Mammary epithelial cell (primary cell): ENCODE measurements at regions of chr1 and their contacts with region 1.

Region 1: DNA sequence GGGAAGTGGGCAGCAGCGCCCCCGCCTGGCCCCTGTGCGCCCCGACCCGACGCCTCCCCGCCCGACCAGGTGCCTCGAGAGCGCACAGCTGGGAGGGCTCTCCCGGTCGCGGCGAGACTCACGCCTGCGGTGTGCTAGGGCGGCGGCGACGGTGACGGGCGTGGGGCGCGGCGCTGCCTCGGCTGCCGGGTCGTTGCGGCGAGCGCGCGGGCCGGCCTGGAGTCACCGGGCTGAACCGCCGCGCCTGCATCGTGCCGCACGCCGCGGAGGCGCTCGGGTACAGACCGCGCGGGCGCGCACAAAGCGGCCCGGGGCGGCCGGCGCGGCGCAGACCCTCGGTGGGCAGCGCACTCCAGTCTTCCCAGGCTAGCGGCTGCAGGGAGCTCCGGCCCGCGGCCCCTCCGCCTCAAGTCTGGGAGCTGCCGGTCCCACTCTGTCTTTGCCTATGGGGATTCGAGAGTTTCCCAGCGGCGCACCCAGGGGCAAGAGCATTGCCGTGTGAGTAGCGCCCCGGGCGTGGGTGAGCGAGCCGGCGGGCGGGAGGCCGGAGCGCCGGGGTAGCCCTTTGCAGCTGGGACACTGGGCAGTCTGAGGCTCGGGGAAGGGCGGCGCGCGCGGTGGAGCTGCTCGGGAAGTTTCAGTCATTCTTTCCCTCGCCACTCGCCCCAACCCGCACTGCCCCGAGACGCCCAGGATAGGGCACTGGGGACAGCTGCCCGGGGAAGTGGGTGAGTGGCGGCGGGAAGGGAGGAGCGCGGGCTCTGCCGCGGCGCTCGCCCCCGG is at the start of gene SLC35F3:
- DNase-seq: peak; percentile 82
- H3K4me3 ChIP-seq: peak within 1 kb of the TSS; percentile 79 to 88 (median 85)
- H3K27ac ChIP-seq: peak within 1 kb of the TSS; percentile 70
- H3K4me1 ChIP-seq: peaks cover 26% of the 10 kb centered on the region
- H3K27me3 ChIP-seq: no peaks in the 10 kb centered on the region
- CTCF ChIP-seq: peak; percentile 43 to 54
- total RNA-seq, gene SLC35F3: 14.6 to 23.3 TPM

Region 2: DNA sequence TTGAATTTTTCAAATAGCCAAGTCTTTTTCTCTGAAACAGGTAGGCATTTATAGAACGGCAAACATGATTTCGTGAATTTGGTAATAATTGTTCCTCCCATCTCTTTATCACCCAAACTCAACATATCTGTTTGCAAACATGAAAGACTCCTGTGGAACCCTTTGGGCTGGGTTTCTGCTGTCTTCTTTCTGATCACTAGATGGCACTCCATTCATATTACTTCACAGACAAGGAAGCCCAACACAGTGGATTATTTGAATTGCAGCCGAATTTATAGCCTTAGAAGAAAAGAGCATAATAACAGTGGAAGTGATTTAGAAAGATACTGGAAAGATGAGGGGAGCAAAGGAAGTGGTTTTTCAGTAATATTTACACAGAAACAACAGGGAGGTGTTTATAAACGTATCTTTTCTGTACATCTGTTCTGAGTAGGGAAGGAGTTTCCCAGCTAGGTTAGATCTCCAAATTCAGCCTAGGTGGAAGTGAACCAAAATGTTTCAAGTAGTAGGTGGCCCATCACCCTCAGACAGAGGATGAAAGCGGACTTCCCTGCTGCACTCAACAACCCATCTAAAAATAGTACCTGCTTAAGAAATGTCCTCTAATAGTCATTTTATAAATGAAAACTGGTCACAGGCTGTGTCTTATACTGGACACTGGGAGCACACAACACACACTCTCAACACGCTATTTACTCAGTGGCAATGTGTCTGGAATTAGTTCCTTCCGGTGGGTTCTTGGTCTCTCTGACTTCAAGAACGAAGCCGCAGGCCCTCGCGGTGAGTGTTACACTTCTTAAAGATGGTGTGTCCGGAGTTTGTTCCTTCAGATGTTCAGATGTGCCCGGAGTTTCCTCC is 509.7 kb before region 1 on chr1:
- CTCF ChIA-PET with region 1: no interaction called
- dilution Hi-C with region 1: no loop called
- in situ Hi-C with region 1: no loop called
- intact Hi-C with region 1: loop called (anchors 10 kb)
- DNase-seq: peak; percentile 43
- H3K4me3 ChIP-seq: no peak overlapping the region
- H3K27ac ChIP-seq: no peak overlapping the region
- H3K4me1 ChIP-seq: no peaks in the 10 kb centered on the region
- H3K27me3 ChIP-seq: peaks cover 1% of the 10 kb centered on the region
- CTCF ChIP-seq: peak; percentile 83 to 89

Region 3: DNA sequence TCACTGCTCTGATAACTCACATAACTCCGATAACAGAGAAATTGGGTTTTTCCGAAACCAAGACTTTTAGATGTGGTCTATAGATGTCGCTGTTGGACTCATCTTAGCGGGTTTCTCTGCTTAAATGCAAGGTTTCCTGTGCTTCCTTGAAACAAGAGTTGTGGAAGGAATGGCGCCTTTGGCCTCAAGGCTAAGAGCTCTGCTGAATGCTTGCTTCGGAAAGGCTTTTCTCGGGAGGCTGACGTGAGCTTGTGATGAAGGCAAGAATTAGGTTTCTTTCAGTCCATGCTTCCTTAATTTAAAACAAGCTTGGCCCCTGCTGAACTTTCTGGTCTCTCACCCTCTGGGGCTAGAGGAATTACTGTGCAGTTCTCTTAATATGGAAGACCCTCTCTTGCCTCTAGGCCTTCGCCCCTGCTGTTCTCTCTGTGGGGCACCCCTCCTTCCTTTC is 463.8 kb before region 1 on chr1:
- CTCF ChIA-PET with region 1: no interaction called
- dilution Hi-C with region 1: no loop called
- in situ Hi-C with region 1: no loop called
- intact Hi-C with region 1: loop called (anchors 2 kb)
- DNase-seq: peak; percentile 58
- H3K4me3 ChIP-seq: no peak overlapping the region
- H3K27ac ChIP-seq: no peak overlapping the region
- H3K4me1 ChIP-seq: peaks cover 8% of the 10 kb centered on the region
- H3K27me3 ChIP-seq: no peaks in the 10 kb centered on the region
- CTCF ChIP-seq: peak; percentile 64 to 75

Region 4: GRCh38 chr1:233613252-233614174 is 291.3 kb before region 1 on chr1 and contains the start of gene KCNK1:
- CTCF ChIA-PET with region 1: no interaction called
- dilution Hi-C with region 1: no loop called
- in situ Hi-C with region 1: no loop called
- intact Hi-C with region 1: loop called (anchors 10 kb)
- DNase-seq: peak; percentile 90
- H3K4me3 ChIP-seq: peak within 1 kb of the TSS; percentile 66 to 97 (median 83)
- H3K27ac ChIP-seq: peak within 1 kb of the TSS; percentile 87
- H3K4me1 ChIP-seq: peaks cover 6% of the 10 kb centered on the region
- H3K27me3 ChIP-seq: no peaks in the 10 kb centered on the region
- CTCF ChIP-seq: no peak
- total RNA-seq, gene KCNK1: 9.0 to 20.6 TPM

Region 5: DNA sequence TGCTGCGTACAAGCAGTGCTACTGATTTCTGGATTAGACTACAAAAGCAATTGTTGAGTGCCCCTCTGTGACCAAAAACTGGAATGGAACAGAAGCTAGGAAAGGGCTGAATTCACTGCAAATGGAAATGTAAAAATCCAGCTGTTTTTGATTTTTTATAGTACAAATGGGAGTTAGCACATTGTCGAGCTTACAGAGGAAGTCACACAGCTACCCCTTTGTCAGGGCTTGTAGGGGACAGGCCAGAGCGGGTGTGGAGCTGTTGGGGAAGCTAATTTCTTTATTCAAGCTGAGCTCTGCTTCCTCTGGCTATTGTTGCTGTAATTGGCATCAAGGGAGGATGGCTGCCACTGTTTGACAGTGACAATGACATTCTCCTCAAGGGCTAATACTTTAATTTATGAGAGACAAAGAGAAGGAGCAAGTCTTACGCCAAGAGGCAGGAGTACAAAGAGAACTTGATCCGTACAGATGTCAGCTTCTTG is 95.8 kb after region 1 on chr1:
- CTCF ChIA-PET with region 1: no interaction called
- dilution Hi-C with region 1: no loop called
- in situ Hi-C with region 1: loop called in 1 of 2 experiments (anchors 5 kb)
- intact Hi-C with region 1: loop called (anchors 2 kb)
- DNase-seq: no peak
- H3K4me3 ChIP-seq: no peak overlapping the region
- H3K27ac ChIP-seq: peak overlapping the region; percentile 46
- H3K4me1 ChIP-seq: peaks cover 44% of the 10 kb centered on the region
- H3K27me3 ChIP-seq: no peaks in the 10 kb centered on the region
- CTCF ChIP-seq: no peak